Activated CD4-positive, alpha-beta T cell treated with anti-CD3 and anti-CD28 coated beads, Interleukin-2, amount 10 ng/mL, durations not matched to agents 24 days and 14 days (primary cell): ENCODE measurements at regions of chr19 and their contacts with region 1.

Region 1: GRCh38 chr19:39412100-39412866 is at the start of gene PLEKHG2:
- DNase-seq: peak; percentile 99
- H3K4me3 Mint-ChIP-seq: peak within 1 kb of the TSS; percentile 87
- H3K27ac Mint-ChIP-seq: peak within 1 kb of the TSS; percentile 88
- H3K4me1 Mint-ChIP-seq: peaks cover 47% of the 10 kb centered on the region
- H3K27me3 Mint-ChIP-seq: no peaks in the 10 kb centered on the region
- total RNA-seq, gene PLEKHG2: 42.0 and 46.1 TPM in 2 replicates

Region 2: GRCh38 chr19:39212375-39212742 is 199.9 kb before region 1 on chr19:
- intact Hi-C with region 1: loop called (anchors 2 kb)
- DNase-seq: peak; percentile 89
- H3K4me3 Mint-ChIP-seq: no peak overlapping the region
- H3K27ac Mint-ChIP-seq: no peak overlapping the region
- H3K4me1 Mint-ChIP-seq: no peaks in the 10 kb centered on the region
- H3K27me3 Mint-ChIP-seq: peaks cover 10% of the 10 kb centered on the region

Region 3: GRCh38 chr19:39351537-39352064 is 60.7 kb before region 1 on chr19:
- intact Hi-C with region 1: loop called (anchors 2 kb)
- DNase-seq: peak; percentile 86
- H3K4me3 Mint-ChIP-seq: peak overlapping the region; percentile 15
- H3K27ac Mint-ChIP-seq: peak overlapping the region; percentile 85
- H3K4me1 Mint-ChIP-seq: peaks cover 37% of the 10 kb centered on the region
- H3K27me3 Mint-ChIP-seq: no peaks in the 10 kb centered on the region

Region 4: DNA sequence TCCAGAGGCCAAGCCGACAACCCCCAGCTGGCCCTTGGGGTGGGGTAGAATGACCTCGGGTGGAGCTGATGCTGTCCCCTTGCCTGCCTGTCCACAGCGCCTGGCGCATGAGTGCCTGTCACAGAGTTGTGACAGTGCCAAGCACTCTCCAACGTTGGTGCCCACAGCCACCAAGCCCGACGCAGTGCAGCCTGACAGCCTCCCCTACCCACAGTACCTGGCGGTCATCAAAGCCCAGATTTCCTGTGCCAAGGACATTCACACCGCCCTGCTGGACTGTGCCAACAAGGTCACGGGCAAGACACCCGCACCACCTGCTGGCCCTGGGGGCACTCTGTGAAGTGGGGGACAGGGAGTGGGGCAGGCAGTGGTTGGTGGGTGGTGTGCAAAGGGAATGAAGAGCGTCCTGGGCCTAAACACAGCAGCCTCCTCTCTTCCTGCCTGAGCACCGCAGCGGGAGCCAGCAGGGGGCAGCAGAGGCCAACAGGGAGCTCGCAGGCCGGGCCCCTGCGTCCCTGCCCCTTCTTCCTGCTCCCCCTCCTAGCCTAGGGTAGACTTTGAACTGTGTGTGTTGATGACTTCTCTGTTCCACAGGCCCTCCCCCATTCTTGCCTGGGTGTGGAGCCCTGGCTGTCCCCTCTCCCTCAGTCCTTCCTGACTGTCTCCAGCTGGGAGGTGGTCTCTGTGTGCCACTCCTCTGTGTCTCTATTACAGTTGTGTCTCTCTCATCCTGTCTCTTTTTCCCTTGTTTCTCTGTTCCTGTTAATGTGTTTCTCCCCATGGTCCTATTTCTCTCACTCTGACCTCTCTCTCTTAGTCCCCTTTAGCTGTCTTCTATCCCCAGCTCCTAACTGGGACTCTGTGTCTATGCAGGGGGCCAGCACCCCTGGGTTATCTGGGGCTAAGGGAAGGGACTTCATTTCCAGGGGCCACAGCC is 14.7 kb before region 1 on chr19:
- intact Hi-C with region 1: loop called (anchors 1 kb)
- DNase-seq: peak; percentile 98
- H3K4me3 Mint-ChIP-seq: peak overlapping the region; percentile 60
- H3K27ac Mint-ChIP-seq: peak overlapping the region; percentile 90
- H3K4me1 Mint-ChIP-seq: peaks cover 51% of the 10 kb centered on the region
- H3K27me3 Mint-ChIP-seq: no peaks in the 10 kb centered on the region